Mammary epithelial cell (primary cell): ENCODE measurements at regions of chr4 and their contacts with region 1.

Region 1: DNA sequence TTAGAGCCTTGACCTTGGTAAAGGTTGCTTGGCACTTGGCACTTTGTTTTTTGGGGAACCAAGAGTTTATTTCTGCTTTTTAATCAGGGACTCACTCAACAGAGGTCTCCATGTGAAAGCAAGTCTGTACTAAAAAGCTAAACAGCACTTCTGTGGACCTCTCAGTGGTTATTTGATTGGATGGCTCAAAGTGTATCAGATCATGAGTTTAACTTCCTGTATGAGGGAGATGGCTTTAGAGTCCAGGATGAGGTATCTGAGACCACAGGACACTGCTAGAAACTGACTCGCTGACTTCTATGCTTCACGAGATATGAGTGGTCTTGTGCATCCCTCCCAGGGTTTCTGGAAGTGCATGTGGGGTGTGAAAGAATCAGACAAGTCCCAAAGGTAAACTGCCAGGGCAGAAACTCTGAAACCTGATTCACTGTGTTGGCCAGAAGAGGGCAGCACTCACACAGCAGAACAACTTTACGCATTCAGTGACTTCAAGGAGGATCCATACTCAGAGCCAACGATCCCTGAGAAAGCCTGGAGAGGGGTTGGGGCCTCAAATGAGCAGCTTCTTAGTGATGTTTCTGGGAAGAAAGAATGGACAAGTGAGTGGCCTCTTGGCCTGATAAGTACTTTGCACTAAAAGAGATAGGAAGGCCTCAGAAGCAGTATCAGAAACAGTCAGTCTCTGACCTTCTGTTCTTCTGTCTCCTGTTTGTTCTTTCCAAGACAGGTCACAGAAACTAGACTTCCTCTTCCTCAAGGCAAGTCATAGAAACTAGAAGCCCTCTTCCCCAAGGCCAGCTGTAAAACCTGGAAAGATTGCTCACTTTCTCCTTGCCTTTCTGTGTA is 220.3 kb upstream of the CXCL13 start:
- DNase-seq: peak; percentile 53
- H3K4me3 ChIP-seq: no peak overlapping the region
- H3K27ac ChIP-seq: no peak overlapping the region
- H3K4me1 ChIP-seq: no peaks in the 10 kb centered on the region
- H3K27me3 ChIP-seq: peaks cover 10% of the 10 kb centered on the region
- CTCF ChIP-seq: peak; percentile 86 to 87

Region 2: DNA sequence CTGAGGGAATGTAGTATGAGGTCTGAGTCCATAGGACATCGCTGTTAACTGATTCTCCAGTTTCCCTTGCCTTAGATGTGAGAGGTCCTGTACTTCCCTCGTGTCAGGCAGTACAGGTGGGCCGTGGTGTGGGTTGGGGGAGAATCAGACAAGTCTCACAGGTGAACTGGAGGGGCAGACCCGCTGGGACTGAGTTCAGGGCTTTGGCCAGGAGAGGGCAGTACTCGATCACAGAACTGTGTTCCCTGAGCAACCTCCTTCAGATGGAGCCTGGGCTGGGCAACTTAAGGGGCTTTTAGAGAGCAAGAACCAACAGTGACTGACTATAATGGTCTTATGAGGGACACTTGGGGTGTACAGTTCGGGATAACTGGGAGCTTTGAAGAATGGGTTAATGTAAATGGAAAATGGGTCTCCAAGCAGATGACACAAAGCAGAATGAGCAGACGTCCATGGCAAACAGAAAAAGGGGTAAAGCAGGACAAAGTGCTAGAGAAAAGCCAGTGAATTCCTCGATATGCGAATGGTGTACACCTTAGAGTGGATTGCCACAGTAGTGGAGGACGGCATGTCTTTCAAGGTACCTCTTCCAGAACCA is 144.8 kb before region 1 on chr4:
- CTCF ChIA-PET with region 1: no interaction called
- dilution Hi-C with region 1: no loop called
- in situ Hi-C with region 1: no loop called
- intact Hi-C with region 1: no loop called
- DNase-seq: peak; percentile 28
- H3K4me3 ChIP-seq: no peak overlapping the region
- H3K27ac ChIP-seq: no peak overlapping the region
- H3K4me1 ChIP-seq: no peaks in the 10 kb centered on the region
- H3K27me3 ChIP-seq: no peaks in the 10 kb centered on the region
- CTCF ChIP-seq: peak; percentile 91 to 93

Region 3: DNA sequence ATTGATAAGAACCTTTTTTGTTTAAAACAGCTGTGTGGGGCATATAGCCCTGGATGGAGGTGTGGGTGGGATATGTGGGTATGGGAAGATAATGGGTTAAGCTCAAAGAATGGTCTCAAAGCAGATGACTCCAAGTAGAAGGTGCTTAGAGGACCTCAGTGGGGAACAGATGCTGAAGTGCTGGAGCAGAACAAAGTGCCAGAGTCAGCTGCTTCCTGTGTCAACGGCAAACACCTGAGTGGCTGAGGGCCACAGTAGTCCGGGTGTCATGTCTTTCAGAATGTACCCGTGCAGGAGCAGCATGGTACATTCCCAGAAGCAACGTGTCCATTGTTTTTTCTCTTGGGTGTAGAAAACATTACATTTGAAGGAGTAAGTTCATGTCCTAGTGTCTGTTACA is 17.7 kb before region 1 on chr4:
- CTCF ChIA-PET with region 1: no interaction called
- dilution Hi-C with region 1: no loop called
- in situ Hi-C with region 1: no loop called
- intact Hi-C with region 1: no loop called
- DNase-seq: no peak
- H3K4me3 ChIP-seq: no peak overlapping the region
- H3K27ac ChIP-seq: no peak overlapping the region
- H3K4me1 ChIP-seq: no peaks in the 10 kb centered on the region
- H3K27me3 ChIP-seq: peaks cover 2% of the 10 kb centered on the region
- CTCF ChIP-seq: no peak

Region 4: GRCh38 chr4:77433418-77433733 is 48.0 kb after region 1 on chr4:
- CTCF ChIA-PET with region 1: no interaction called
- dilution Hi-C with region 1: no loop called
- in situ Hi-C with region 1: no loop called
- intact Hi-C with region 1: loop called (anchors 1 kb)
- DNase-seq: peak; percentile 44
- H3K4me3 ChIP-seq: no peak overlapping the region
- H3K27ac ChIP-seq: no peak overlapping the region
- H3K4me1 ChIP-seq: no peaks in the 10 kb centered on the region
- H3K27me3 ChIP-seq: no peaks in the 10 kb centered on the region
- CTCF ChIP-seq: peak; percentile 46 to 66

Region 5: DNA sequence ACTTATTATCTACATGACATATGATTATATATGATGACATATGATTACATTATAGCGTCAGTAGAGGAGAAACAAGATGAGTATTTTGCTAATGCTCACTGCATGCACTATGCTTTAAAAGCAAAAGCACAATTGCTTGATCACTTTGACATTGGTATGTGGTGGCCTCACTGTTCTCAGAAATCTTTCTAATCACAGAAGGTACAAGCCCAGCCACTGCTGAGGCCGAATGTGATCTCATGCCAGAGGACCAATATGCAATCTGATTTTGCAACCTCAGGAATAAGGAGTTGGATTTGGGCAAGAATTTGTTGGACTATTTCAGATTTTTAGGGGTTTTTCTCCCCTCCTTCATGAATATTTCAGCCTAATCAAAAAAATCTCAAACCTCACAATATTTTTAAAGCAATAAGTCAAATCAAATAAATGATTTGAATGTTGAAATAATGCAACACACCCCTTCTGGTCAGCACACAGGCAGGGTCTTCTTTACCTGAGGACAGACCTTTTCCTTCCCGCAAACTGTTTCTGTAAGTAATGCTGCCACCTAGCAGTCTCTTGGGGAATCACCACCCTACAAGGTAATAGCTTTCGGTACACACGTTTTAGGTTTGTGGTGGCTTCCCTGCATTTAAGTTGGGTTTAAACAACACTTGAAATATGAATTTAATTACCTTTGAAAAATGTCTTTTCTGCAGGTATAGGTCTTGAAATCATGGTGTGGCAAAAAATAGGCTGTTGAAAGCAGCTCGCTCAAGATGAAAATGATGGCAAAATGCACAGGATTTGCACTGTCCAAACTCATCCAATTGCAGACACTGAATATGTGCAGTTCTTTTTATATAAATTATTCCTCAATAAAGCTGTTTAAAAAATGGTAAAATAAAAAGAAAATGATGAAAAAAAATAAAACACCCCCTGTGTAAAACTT is 215.4 kb after region 1 on chr4:
- CTCF ChIA-PET with region 1: no interaction called
- dilution Hi-C with region 1: no loop called
- in situ Hi-C with region 1: loop called in 1 of 2 experiments (anchors 5 kb)
- intact Hi-C with region 1: loop called (anchors 1 kb)
- DNase-seq: peak; percentile 23
- H3K4me3 ChIP-seq: no peak overlapping the region
- H3K27ac ChIP-seq: no peak overlapping the region
- H3K4me1 ChIP-seq: peaks cover 10% of the 10 kb centered on the region
- H3K27me3 ChIP-seq: no peaks in the 10 kb centered on the region
- CTCF ChIP-seq: peak; percentile 88 to 92

Region 6: DNA sequence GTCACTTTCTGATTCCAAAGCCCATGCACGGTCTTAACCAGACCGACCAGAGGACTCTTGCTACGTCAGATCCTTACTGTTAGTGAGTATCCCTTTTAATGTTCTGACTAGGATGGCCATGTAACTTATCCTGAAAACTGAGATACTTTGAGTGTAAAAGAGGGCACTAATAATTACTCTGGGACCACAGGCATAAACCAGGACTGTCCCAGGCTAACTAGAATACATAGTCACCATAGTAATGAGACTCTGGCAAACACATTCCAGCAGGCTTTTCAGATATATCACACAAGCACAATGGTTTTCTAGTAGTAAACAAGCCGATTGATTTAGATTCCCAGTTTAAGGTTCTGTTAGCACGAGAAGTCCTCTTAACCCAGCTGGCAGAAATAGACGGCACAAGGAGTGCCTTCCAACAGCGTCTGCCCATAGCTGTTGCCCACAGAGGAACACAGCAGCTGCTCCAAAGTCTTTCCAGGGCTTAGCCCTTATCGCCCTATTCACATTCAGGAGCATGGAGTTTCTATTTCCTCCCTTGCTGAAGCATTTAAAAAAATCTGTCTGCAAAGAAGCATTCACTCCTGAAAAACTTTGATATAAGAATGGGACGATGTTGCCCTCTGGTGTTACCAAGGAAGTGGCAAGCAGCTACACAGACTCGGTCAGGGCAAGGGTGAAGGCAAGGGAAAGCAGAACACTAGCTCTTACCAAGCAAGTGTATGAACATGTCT is 312.7 kb after region 1 on chr4:
- CTCF ChIA-PET with region 1: no interaction called
- dilution Hi-C with region 1: no loop called
- in situ Hi-C with region 1: no loop called
- intact Hi-C with region 1: loop called (anchors 1 kb)
- DNase-seq: peak; percentile 64
- H3K4me3 ChIP-seq: no peak overlapping the region
- H3K27ac ChIP-seq: no peak overlapping the region
- H3K4me1 ChIP-seq: peaks cover 30% of the 10 kb centered on the region
- H3K27me3 ChIP-seq: no peaks in the 10 kb centered on the region
- CTCF ChIP-seq: peak; percentile 63 to 77